ENCODE measurements at regions of chr12 and their contacts with region 1.

Region 1: GRCh38 chr12:2537868-2538541 is 256.8 kb upstream of the FKBP4 start:
- DNase-seq: no peak
- ATAC-seq: no peak
- H3K4me3 Mint-ChIP-seq: no peak overlapping the region
- H3K27ac Mint-ChIP-seq: no peak overlapping the region
- H3K4me1 Mint-ChIP-seq: peaks cover 2% of the 10 kb centered on the region
- H3K27me3 Mint-ChIP-seq: no peaks in the 10 kb centered on the region
- CTCF ChIP-seq: no peak

Region 2: GRCh38 chr12:2574355-2574935 is 36.4 kb after region 1 on chr12:
- CTCF ChIA-PET with region 1: no interaction called
- POLR2A ChIA-PET with region 1: interaction called, 10 read pairs
- DNase-seq: no peak
- ATAC-seq: no peak
- H3K4me3 Mint-ChIP-seq: no peak overlapping the region
- H3K27ac Mint-ChIP-seq: no peak overlapping the region
- H3K4me1 Mint-ChIP-seq: no peaks in the 10 kb centered on the region
- H3K27me3 Mint-ChIP-seq: peaks cover 11% of the 10 kb centered on the region
- CTCF ChIP-seq: no peak

Region 3: DNA sequence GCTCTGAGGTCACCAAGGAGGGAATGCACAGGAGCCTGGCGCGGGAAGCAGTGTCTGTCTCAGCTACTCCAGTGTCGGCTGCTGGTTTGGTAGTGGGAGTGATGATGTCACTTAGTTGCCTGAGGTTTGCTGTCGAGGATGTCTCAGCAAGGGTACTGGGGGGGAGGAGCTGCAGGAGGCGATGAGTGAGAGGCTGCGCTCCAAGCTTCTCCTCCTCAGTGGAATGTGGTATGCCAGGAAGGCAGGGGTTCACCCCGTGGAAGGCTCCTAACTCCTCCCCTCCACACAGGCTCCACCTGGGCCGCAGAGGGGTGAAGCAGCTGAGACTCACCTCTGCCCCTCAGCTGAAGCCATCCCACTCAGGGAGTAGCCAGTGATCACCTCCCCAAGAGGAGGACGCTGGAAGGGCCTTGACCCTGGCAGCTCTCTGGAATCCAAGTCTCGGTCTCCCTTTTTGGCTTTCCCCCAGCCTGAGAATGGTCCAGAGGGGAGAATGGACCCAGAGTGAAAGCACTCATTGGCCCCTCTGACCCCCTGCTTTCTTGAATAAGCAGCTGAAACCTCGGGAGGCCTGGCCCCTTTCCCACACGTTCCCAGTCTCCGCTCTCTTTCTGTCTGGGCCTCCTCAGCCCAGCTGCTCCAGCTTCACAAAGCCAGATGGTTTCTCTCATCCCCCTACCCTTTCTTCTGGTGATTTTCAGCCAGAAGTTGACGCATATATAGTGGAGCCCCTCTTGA is 77.8 kb after region 1 on chr12:
- CTCF ChIA-PET with region 1: no interaction called
- POLR2A ChIA-PET with region 1: no interaction called
- DNase-seq: peak; percentile 28
- ATAC-seq: peak; percentile 82
- H3K4me3 Mint-ChIP-seq: no peak overlapping the region
- H3K27ac Mint-ChIP-seq: no peak overlapping the region
- H3K4me1 Mint-ChIP-seq: peaks cover 12% of the 10 kb centered on the region
- H3K27me3 Mint-ChIP-seq: no peaks in the 10 kb centered on the region
- CTCF ChIP-seq: no peak

Measured in WTC11 (cell line).